Caki2 (cell line): ENCODE measurements at regions of chr17 and their contacts with region 1.

Region 1: DNA sequence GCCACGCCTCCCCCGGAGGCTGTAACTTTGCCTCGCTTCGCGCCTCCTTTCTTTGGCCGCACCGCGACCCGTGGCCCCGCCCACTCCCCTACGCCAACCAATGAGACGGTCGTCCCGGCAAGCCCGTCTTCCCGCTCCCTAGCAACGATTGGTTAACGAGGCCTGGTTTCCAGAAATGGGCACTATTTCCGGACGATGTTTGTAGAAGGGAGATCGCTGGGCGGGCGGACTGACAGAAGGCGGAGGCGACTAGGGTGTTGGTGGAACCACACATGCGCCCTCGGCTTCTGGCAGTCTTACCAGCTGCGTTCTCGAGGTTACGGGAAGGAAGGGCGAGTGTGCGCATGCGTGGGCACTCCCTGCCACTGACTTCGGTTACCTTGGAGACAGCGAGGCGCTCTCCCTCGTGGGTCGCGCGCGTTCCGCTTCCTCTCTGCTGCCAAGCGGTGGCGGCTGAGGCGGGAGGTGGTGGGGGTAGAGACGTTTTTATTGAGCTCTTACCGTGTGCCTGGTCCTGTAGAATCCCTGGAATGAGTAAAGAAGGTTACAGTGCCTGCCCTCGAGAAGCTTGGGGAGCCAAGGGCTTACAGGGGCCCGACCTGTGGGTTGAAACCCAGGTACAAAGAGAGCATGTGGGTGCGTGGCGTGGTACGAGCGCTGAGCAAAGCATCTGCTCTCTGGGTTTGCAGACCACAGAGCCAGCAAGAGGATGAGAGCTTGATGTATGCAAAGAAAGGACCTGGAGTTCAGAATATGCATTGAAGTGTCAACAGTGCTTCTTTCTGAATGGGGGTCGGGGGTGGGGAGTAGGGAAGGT is 500 bp upstream of the MAP3K14 start:
- DNase-seq: peak; percentile 100

Region 2: GRCh38 chr17:45149669-45150664 is 167.4 kb before region 1 on chr17:
- in situ Hi-C with region 1: loop called (anchors 10 kb)
- DNase-seq: no peak